ENCODE measurements at regions of chr7 and their contacts with region 1.

Region 1: DNA sequence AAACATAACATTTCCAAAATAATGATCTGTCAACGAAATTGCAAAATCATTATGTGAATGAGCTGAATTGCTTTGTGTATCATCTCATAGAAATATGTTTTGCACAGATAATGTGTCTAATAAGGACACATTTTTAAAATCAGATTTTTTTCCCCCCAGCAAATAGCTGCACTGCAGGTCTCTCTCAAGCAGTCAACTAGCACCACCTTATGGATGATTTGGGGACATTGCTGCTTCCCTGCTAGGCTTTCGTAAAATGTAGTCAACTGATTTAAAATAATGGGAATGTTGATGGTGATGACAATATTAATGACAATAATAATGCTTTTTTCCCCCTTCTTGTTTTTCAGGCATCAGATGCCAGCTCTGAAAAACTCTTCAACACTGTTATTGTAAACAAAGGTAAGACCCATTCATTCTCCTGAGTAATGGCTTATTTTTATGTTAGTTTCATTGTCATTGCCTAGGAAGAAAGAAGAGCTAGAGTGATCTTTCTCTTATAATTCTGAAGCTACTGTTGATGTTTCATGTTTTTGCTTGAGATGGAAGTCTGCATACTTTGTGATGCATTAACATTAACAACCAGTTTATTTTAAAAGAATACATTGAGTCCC is 433.6 kb upstream of the GALNT17 start:
- DNase-seq: no peak
- ATAC-seq: no peak
- H3K4me3 Mint-ChIP-seq: peak overlapping the region; percentile 95
- H3K27ac Mint-ChIP-seq: no peak overlapping the region
- H3K4me1 Mint-ChIP-seq: no peaks in the 10 kb centered on the region; the same call in 1 of the 2 replicates
- H3K27me3 Mint-ChIP-seq: peaks cover 43% of the 10 kb centered on the region
- CTCF ChIP-seq: peak; percentile 38; the same call in 1 of the 2 replicates

Region 2: GRCh38 chr7:69599955-69600709 is 1098.2 kb before region 1 on chr7:
- CTCF ChIA-PET with region 1: no interaction called
- POLR2A ChIA-PET with region 1: interaction called, 11 read pairs
- DNase-seq: no peak
- ATAC-seq: no peak
- H3K4me3 Mint-ChIP-seq: peak overlapping the region; percentile 83
- H3K27ac Mint-ChIP-seq: no peak overlapping the region
- H3K4me1 Mint-ChIP-seq: peaks cover 4% of the 10 kb centered on the region
- H3K27me3 Mint-ChIP-seq: peaks cover 34% of the 10 kb centered on the region
- CTCF ChIP-seq: no peak

Region 3: DNA sequence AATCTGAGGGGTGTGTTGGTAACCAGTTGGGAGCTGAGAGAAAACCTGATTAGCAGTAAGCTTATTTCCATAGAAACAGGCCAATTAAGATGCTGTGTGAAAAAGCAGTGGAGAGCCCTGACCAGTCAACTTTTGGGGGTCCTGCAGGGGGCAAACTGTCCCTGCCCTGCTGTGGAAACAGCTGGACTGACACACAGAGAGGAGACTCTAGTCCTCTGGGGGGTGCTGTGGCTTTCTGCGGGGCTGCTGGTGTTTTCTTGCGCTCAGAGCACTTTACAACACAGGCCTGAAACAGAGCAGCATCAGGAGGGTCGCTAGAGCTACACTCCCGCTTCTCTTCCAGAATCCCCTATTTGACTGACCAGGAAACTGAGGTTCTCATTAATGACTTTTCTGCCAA is 113.3 kb before region 1 on chr7:
- CTCF ChIA-PET with region 1: interaction called, 41 read pairs
- POLR2A ChIA-PET with region 1: interaction called, 6 read pairs
- DNase-seq: peak; percentile 25
- ATAC-seq: peak; percentile 48
- H3K4me3 Mint-ChIP-seq: no peak overlapping the region
- H3K27ac Mint-ChIP-seq: no peak overlapping the region
- H3K4me1 Mint-ChIP-seq: peaks cover 67% of the 10 kb centered on the region
- H3K27me3 Mint-ChIP-seq: no peaks in the 10 kb centered on the region
- CTCF ChIP-seq: no peak

Region 4: GRCh38 chr7:70681469-70682350 is 16.6 kb before region 1 on chr7:
- CTCF ChIA-PET with region 1: no interaction called
- POLR2A ChIA-PET with region 1: no interaction called
- DNase-seq: no peak
- ATAC-seq: peak; percentile 66
- H3K4me3 Mint-ChIP-seq: peak overlapping the region; percentile 38
- H3K27ac Mint-ChIP-seq: no peak overlapping the region
- H3K4me1 Mint-ChIP-seq: peaks cover 32% of the 10 kb centered on the region
- H3K27me3 Mint-ChIP-seq: peaks cover 92% of the 10 kb centered on the region
- CTCF ChIP-seq: no peak

Region 5: DNA sequence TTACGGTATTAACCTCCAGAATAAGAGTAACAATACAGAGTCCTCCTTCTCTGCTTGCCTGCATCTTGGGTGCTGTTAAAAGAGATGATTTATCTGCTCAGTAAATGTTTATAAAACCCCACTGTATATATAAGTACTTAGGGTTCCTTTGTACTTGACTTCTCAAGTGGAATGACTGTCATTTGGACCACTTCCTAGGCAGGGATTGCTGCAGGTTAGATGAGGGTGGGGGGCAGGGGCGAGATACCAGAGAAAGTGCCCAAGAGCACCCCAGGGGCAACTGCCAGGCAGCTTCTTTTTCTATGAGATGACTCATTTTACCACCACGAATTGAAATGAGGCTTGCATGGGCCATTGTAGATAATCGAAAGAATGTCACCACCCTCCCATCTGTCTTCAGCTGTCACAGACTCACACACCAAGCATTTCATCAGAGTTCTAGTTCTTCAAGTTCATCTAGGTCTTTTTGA is 11.7 kb after region 1 on chr7:
- CTCF ChIA-PET with region 1: interaction called, 10 read pairs
- POLR2A ChIA-PET with region 1: interaction called, 4 read pairs
- DNase-seq: no peak
- ATAC-seq: no peak
- H3K4me3 Mint-ChIP-seq: no peak overlapping the region; the same call in 1 of the 2 replicates
- H3K27ac Mint-ChIP-seq: peak overlapping the region; percentile 17
- H3K4me1 Mint-ChIP-seq: peaks cover 47% of the 10 kb centered on the region
- H3K27me3 Mint-ChIP-seq: peaks cover 58% of the 10 kb centered on the region
- CTCF ChIP-seq: no peak

Region 6: GRCh38 chr7:70738151-70738885 is 40.0 kb after region 1 on chr7:
- CTCF ChIA-PET with region 1: no interaction called
- POLR2A ChIA-PET with region 1: no interaction called
- DNase-seq: no peak
- ATAC-seq: no peak
- H3K4me3 Mint-ChIP-seq: no peak overlapping the region
- H3K27ac Mint-ChIP-seq: 0 out of 2 replicates have a peak overlapping the region, but pooled peaks have one; percentile 74
- H3K4me1 Mint-ChIP-seq: peaks cover 63% of the 10 kb centered on the region
- H3K27me3 Mint-ChIP-seq: no peaks in the 10 kb centered on the region; the same call in none of the 2 replicates
- CTCF ChIP-seq: no peak

Region 7: DNA sequence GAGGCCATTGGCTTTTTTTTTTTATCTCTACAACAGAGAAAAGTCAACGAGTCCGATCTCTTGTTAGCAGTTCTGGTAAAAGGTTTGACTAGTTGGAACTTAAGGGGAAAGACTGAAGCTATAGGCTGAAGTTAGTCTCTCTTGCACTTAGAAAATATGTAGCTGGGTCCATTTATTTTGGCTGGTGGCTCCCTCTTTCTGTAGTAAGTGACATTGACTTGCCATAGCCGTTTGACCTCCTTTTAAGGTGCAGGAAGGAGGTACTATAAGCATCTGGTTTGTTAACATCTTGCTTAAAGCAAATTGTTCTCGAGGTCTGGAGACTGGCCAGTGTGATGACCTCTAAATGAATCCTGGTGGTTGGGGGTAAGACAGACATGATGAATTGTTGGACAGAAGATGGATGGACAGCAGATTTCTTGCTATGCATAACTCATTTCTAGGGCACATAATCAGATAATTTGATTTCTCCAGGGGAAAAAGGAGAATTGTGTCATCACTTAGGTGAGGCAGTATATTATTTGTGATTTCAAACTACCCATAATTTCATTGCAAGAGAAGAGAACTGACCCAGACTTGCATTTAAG is 77.3 kb after region 1 on chr7:
- CTCF ChIA-PET with region 1: interaction called, 20 read pairs
- POLR2A ChIA-PET with region 1: no interaction called
- DNase-seq: no peak
- ATAC-seq: peak; percentile 65
- H3K4me3 Mint-ChIP-seq: no peak overlapping the region
- H3K27ac Mint-ChIP-seq: no peak overlapping the region
- H3K4me1 Mint-ChIP-seq: peaks cover 48% of the 10 kb centered on the region
- H3K27me3 Mint-ChIP-seq: no peaks in the 10 kb centered on the region
- CTCF ChIP-seq: no peak

Region 8: DNA sequence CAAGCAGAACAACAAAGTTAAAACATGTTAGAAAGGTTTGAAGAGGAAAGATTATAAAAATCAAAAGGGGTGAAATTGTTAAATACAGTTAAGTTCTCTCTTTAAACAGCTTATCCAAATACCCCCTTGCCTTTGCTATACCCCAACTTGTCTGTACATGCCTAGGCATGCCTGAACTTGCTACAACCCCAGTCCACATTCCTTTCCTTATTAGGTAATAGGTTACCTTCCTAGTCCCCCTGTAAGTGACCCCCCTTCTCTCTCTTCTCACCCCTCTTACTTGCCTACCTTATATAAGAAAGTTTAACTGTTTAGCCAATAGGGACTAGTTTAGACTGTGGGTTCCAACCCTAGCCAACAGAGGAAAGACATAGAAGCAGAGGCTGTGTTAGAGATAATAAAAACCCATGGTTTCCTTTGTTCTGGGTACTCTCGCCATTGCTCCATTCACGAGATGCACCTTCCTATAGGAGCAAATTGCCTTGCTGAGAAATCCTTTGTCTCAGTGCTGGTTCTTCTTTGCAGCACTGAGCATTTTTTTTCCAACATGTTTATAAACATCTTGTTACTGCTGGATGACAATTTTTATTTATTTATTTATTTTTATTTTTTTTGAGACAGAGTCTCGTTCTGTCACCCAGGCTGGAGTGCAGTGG is 151.4 kb after region 1 on chr7:
- CTCF ChIA-PET with region 1: no interaction called
- POLR2A ChIA-PET with region 1: no interaction called
- DNase-seq: no peak
- ATAC-seq: peak; percentile 68
- H3K4me3 Mint-ChIP-seq: no peak overlapping the region
- H3K27ac Mint-ChIP-seq: peak overlapping the region; percentile 95
- H3K4me1 Mint-ChIP-seq: peaks cover 18% of the 10 kb centered on the region
- H3K27me3 Mint-ChIP-seq: peaks cover 6% of the 10 kb centered on the region
- CTCF ChIP-seq: no peak

Region 9: DNA sequence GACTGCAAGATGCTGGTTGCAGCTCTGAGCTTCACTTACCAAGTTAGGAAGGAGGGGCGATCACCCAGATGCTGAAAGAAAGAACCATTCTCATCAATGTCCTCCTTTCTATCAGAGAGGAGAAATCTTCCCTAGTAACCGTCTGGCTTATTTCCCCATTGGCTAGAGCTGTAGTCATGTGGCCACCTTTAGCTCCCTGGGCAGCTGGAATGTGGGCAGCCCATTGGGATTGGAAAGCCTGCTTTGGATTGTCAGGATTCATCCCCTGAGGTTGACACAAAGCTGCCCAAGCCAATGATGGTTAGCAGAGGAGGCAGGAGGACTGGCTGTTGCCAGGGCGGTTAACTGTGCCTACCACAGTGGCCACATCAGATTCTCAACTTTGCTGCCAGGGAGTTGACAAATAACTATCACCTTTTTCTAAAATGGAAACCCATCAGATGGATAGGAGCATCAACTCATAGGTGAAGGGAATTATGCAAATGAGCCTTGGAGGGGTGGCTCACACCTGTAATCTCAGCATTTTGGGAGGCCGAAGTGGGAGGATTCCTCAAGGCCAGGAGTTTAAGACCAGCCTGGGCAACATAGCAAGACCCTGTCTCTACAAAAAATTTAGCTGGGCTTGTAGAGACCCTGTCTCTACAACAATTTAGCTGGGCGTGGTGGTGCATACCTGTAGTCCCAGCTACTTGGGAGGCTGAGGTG is 227.2 kb after region 1 on chr7:
- CTCF ChIA-PET with region 1: no interaction called
- POLR2A ChIA-PET with region 1: no interaction called
- DNase-seq: peak; percentile 31
- ATAC-seq: peak; percentile 91
- H3K4me3 Mint-ChIP-seq: no peak overlapping the region
- H3K27ac Mint-ChIP-seq: peak overlapping the region; percentile 94
- H3K4me1 Mint-ChIP-seq: peaks cover 30% of the 10 kb centered on the region
- H3K27me3 Mint-ChIP-seq: no peaks in the 10 kb centered on the region; the same call in 1 of the 2 replicates
- CTCF ChIP-seq: no peak